WTC11 (cell line): ENCODE measurements at regions of chr5 and their contacts with region 1.

Region 1: DNA sequence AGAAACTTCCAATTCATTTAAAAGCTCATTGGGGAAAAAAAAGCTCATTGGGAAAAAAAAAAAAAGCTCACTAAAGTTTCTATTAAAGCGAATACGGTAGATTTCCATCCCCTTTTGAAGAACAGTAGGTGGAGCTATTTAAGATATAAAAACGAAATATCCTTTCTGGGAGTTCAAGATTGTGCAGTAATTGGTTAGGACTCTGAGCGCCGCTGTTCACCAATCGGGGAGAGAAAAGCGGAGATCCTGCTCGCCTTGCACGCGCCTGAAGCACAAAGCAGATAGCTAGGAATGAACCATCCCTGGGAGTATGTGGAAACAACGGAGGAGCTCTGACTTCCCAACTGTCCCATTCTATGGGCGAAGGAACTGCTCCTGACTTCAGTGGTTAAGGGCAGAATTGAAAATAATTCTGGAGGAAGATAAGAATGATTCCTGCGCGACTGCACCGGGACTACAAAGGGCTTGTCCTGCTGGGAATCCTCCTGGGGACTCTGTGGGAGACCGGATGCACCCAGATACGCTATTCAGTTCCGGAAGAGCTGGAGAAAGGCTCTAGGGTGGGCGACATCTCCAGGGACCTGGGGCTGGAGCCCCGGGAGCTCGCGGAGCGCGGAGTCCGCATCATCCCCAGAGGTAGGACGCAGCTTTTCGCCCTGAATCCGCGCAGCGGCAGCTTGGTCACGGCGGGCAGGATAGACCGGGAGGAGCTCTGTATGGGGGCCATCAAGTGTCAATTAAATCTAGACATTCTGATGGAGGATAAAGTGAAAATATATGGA is at the start of gene PCDHGA12:
- DNase-seq: no peak
- ATAC-seq: peak; percentile 43; the same call in 1 of the 2 replicates
- H3K4me3 Mint-ChIP-seq: no peak within 1 kb of the TSS
- H3K27ac Mint-ChIP-seq: no peak within 1 kb of the TSS
- H3K4me1 Mint-ChIP-seq: no peaks in the 10 kb centered on the region
- H3K27me3 Mint-ChIP-seq: no peaks in the 10 kb centered on the region
- CTCF ChIP-seq: no peak
- total RNA-seq, gene PCDHGA12: 1.6 to 2.1 TPM (median 1.9 TPM) in 3 replicates

Region 2: GRCh38 chr5:141492168-141492885 is 61.8 kb after region 1 on chr5:
- CTCF ChIA-PET with region 1: interaction called, 11 read pairs
- POLR2A ChIA-PET with region 1: no interaction called
- DNase-seq: peak; percentile 49
- ATAC-seq: peak; percentile 10
- H3K4me3 Mint-ChIP-seq: peak overlapping the region; percentile 66
- H3K27ac Mint-ChIP-seq: no peak overlapping the region
- H3K4me1 Mint-ChIP-seq: peaks cover 57% of the 10 kb centered on the region
- H3K27me3 Mint-ChIP-seq: peaks cover 52% of the 10 kb centered on the region
- CTCF ChIP-seq: no peak

Region 3: GRCh38 chr5:141532726-141533125 is 102.2 kb after region 1 on chr5:
- CTCF ChIA-PET with region 1: no interaction called
- POLR2A ChIA-PET with region 1: no interaction called
- DNase-seq: no peak
- ATAC-seq: no peak
- H3K4me3 Mint-ChIP-seq: no peak overlapping the region
- H3K27ac Mint-ChIP-seq: no peak overlapping the region
- H3K4me1 Mint-ChIP-seq: no peaks in the 10 kb centered on the region
- H3K27me3 Mint-ChIP-seq: no peaks in the 10 kb centered on the region
- CTCF ChIP-seq: no peak